CD14-positive monocyte (primary cell): ENCODE measurements at regions of chr7 and their contacts with region 1.

Region 1: DNA sequence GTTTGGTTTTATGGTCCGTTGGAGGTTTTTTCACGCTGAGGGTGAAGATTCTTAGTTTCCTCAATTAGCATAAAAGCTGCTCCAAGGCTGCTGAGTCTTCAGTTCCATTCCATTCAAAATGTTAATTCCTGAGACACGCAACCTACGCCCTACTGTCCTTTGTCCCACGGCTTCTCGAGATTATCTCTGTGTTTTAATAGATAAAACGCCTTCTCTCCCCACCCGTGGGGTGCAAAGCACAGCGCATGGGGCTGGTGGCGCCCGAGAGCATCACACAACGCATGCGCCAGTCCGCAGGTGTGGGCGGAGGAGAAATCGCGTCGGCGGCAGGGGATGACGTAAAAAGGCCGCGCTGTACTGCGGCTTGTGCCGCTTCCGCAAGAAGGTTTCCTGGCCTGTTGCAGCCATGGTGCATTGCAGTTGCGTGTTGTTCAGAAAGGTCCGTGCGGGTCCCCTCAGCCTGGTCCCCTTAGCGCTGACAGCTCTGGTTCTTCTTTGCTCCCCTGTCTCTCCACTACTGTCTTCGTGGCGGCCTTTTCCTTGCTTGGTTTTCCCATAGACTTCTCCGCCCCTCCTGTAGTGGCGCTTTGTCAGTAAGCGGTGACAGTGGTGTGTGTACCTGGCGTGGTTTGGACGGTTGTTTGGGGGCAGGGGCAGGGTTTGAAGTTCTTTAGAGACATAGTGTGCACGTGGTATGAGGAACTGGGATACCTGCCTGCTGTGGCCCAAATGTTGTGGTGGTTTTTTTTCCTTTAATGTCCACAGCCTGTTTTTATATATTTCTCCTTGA is at the start of gene GTPBP10:
- DNase-seq: peak; percentile 93 to 96 (median 96)
- H3K4me3 ChIP-seq: peak within 1 kb of the TSS; percentile 60 to 93 (median 83)
- H3K4me3 Mint-ChIP-seq: peak within 1 kb of the TSS; percentile 87 to 96
- H3K27ac ChIP-seq: peak within 1 kb of the TSS; percentile 73 to 96
- H3K27ac Mint-ChIP-seq: peak within 1 kb of the TSS; percentile 96 to 99 (median 97)
- H3K4me1 ChIP-seq: peaks cover 10 to 22% of the 10 kb centered on the region in 2 donors
- H3K4me1 Mint-ChIP-seq: peaks cover 15% of the 10 kb centered on the region
- H3K27me3 ChIP-seq: no peaks in the 10 kb centered on the region
- H3K27me3 Mint-ChIP-seq: no peaks in the 10 kb centered on the region
- CTCF ChIP-seq: peak; percentile 68
- polyA plus RNA-seq, gene GTPBP10: 7.0 to 12.2 (median 10.4) TPM

Region 2: GRCh38 chr7:90081621-90082020 is 264.9 kb before region 1 on chr7:
- intact Hi-C with region 1: no loop called
- DNase-seq: no peak
- H3K4me3 ChIP-seq: no peak overlapping the region
- H3K4me3 Mint-ChIP-seq: no peak overlapping the region
- H3K27ac ChIP-seq: no peak overlapping the region
- H3K27ac Mint-ChIP-seq: no peak overlapping the region
- H3K4me1 ChIP-seq: no peaks in the 10 kb centered on the region
- H3K4me1 Mint-ChIP-seq: no peaks in the 10 kb centered on the region
- H3K27me3 ChIP-seq: no peaks in the 10 kb centered on the region
- H3K27me3 Mint-ChIP-seq: peaks cover 0 to 3% (median 2%) of the 10 kb centered on the region in 3 donors
- CTCF ChIP-seq: no peak

Region 3: DNA sequence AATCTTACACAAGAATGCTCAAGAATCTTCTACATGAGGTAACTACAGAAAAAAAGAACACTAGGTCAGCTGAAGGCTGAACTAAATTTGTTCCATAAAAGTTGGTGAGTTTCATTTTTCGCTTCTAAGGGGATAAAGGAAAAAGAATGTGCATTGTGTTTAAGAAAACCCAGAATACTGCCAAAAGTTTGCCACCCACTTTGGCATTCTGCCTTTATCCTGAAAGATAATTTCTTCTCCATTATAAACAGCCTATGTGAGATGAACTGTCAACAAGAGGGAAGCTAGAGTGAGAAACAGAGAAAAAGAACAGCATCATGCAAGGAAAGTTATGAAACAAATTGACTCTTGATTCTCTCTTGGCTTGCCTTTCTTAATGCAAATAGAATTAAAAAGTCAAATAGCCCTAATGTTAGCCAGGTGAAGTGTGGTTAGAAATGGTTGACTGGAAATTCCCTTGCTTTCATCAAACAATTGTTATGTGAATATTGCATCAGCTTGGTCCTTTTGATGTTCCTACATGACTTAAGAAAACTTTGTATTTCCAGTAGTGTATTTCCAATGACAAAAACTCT is 166.4 kb before region 1 on chr7:
- intact Hi-C with region 1: loop called in 1 of 2 experiments (anchors 5 kb)
- DNase-seq: no peak
- H3K4me3 ChIP-seq: no peak overlapping the region
- H3K4me3 Mint-ChIP-seq: no peak overlapping the region
- H3K27ac ChIP-seq: peak overlapping the region in 1 of 2 donors; percentile 1
- H3K27ac Mint-ChIP-seq: peak overlapping the region in 2 of 7 donors; percentile 62 to 68
- H3K4me1 ChIP-seq: peaks cover 16 to 27% of the 10 kb centered on the region in 2 donors
- H3K4me1 Mint-ChIP-seq: peaks cover 22% of the 10 kb centered on the region
- H3K27me3 ChIP-seq: no peaks in the 10 kb centered on the region
- H3K27me3 Mint-ChIP-seq: peaks cover 0 to 1% (median 0%) of the 10 kb centered on the region in 3 donors
- CTCF ChIP-seq: no peak

Region 4: GRCh38 chr7:90244909-90245851 is 101.4 kb before region 1 on chr7 and contains the start of gene CFAP69:
- intact Hi-C with region 1: loop called (anchors 10 kb)
- DNase-seq: peak; percentile 44 to 65 (median 59)
- H3K4me3 ChIP-seq: peak within 1 kb of the TSS; percentile 36 to 85 (median 72)
- H3K4me3 Mint-ChIP-seq: peak within 1 kb of the TSS; percentile 91 to 97
- H3K27ac ChIP-seq: peak within 1 kb of the TSS in 1 of 2 donors; percentile 28
- H3K27ac Mint-ChIP-seq: peak within 1 kb of the TSS in 4 of 7 donors; percentile 24 to 77 (median 44)
- H3K4me1 ChIP-seq: peaks cover 10 to 19% of the 10 kb centered on the region in 2 donors
- H3K4me1 Mint-ChIP-seq: peaks cover 21% of the 10 kb centered on the region
- H3K27me3 ChIP-seq: peaks cover 20 to 54% of the 10 kb centered on the region in 2 donors
- H3K27me3 Mint-ChIP-seq: peaks cover 37 to 48% (median 40%) of the 10 kb centered on the region in 3 donors
- CTCF ChIP-seq: no peak
- polyA plus RNA-seq, gene CFAP69: not detected

Region 5: GRCh38 chr7:90298145-90299038 is 48.1 kb before region 1 on chr7:
- intact Hi-C with region 1: no loop called
- DNase-seq: peak in 1 of 3 donors; percentile 5
- H3K4me3 ChIP-seq: no peak overlapping the region
- H3K4me3 Mint-ChIP-seq: no peak overlapping the region
- H3K27ac ChIP-seq: no peak overlapping the region
- H3K27ac Mint-ChIP-seq: no peak overlapping the region
- H3K4me1 ChIP-seq: no peaks in the 10 kb centered on the region
- H3K4me1 Mint-ChIP-seq: no peaks in the 10 kb centered on the region
- H3K27me3 ChIP-seq: no peaks in the 10 kb centered on the region
- H3K27me3 Mint-ChIP-seq: peaks cover 0 to 2% (median 0%) of the 10 kb centered on the region in 3 donors
- CTCF ChIP-seq: no peak